ENCODE measurements at regions of chr6 and their contacts with region 1.

Region 1: GRCh38 chr6:129709769-129710449 is at the start of gene ARHGAP18:
- DNase-seq: peak; percentile 87 to 92
- ATAC-seq: peak; percentile 96 to 99 (median 97)
- H3K4me3 ChIP-seq: peak within 1 kb of the TSS; percentile 44 to 73 (median 68)
- H3K27ac ChIP-seq: peak within 1 kb of the TSS; percentile 48 to 87 (median 78)
- H3K4me1 ChIP-seq: peaks cover 0 to 59% (median 26%) of the 10 kb centered on the region in 9 donors
- H3K27me3 ChIP-seq: no peaks in the 10 kb centered on the region
- CTCF ChIP-seq: no peak
- total RNA-seq, gene ARHGAP18: 3.4 to 15.4 (median 4.2) TPM

Region 2: DNA sequence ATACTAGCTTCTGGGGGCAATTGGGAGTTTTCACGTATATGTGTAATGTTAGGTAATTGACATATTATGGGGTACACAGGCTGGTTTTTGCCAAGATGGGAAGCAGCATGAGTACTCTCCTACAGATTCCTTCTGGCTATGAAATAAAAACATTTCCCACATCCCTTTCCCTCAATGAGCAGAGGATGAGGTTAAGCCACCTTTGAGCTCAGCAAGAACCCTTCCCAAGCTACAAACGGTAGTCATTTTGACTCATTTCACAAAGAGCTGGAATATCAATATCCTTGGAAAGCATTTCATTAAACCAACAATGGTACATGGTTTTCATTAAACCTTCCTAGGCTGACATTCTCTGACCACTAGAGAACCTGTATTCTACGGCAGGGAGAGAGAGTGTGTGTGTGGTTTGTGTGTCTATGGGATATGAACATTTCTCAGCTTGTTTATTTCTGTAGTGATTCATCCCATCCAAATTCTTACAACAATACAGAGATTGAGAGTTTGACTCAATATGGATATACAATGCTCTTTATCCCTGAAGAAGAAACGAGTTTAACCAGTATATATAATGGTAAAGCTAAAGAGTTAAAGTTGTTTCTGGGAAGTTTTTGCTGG is 119.4 kb before region 1 on chr6:
- intact Hi-C with region 1: no loop called
- DNase-seq: no peak
- ATAC-seq: no peak
- H3K4me3 ChIP-seq: no peak overlapping the region
- H3K27ac ChIP-seq: no peak overlapping the region
- H3K4me1 ChIP-seq: no peaks in the 10 kb centered on the region
- H3K27me3 ChIP-seq: no peaks in the 10 kb centered on the region
- CTCF ChIP-seq: no peak

Region 3: DNA sequence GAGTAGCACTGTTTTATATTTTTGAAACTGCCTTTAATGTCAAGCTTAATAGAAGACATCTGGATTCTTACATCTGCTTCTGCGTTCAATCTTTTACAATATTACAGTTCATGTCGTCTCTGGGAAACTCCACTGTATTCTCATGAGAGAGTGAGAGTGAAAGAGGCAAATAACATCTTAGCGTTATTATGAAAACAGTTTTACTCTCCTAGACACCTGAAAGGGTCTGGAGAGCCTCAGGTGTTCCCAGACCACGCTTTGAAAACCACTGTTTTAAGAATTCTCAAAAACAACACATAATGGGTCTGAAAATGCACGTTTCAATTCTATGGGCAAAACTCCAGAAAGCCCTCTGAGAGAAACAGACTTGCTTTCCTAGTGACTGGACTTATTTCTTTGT is 63.3 kb before region 1 on chr6:
- intact Hi-C with region 1: loop called in 2 of 10 experiments (anchors 2 to 10 kb)
- DNase-seq: no peak
- ATAC-seq: peak in 5 of 8 donors; percentile 8 to 66 (median 46)
- H3K4me3 ChIP-seq: peak overlapping the region in 5 of 10 donors; percentile 11 to 26 (median 19)
- H3K27ac ChIP-seq: peak overlapping the region; percentile 25 to 75 (median 58)
- H3K4me1 ChIP-seq: peaks cover 0 to 62% (median 47%) of the 10 kb centered on the region in 9 donors
- H3K27me3 ChIP-seq: no peaks in the 10 kb centered on the region
- CTCF ChIP-seq: no peak

Region 4: GRCh38 chr6:129661536-129662405 is 48.1 kb before region 1 on chr6:
- intact Hi-C with region 1: loop called in 1 of 10 experiments (anchors 10 kb)
- DNase-seq: no peak
- ATAC-seq: no peak
- H3K4me3 ChIP-seq: no peak overlapping the region
- H3K27ac ChIP-seq: peak overlapping the region in 2 of 10 donors; percentile 7
- H3K4me1 ChIP-seq: peaks cover 0 to 59% (median 27%) of the 10 kb centered on the region in 9 donors
- H3K27me3 ChIP-seq: no peaks in the 10 kb centered on the region
- CTCF ChIP-seq: no peak

Region 5: DNA sequence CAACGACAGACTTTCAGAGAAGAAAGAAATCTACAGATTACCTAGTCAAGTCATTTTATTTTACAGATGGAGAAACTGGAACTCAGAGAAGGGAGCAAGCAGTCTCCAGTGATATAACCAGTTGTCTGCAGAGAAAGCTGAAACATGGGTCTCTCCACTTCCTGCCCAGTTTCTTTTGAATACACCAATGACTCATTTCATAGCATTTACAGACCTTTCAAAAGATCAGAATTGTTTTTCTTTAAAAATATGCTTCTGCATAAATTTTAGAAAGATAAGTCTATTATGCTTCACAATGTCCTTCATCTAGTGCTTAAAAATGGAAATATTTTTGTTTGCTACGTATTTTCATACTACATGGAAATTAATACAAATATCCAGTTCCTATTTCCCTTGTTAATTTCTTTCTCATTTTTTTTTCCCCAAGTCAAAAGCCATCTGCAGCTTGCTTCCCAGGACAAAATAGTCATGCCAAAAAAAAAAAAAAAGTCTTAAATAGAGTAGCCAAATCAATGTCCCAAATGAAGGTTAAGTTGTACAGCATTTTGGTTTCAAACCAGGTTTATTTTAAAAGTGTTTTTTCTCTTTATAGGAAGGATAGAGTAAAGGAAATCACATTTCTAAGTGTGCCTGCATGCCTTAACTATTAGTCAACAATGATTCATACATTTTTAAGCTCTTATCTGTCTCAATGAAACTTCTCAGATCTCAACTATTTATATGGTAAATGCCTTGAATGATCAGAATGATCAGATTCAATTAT is 36.8 kb before region 1 on chr6:
- intact Hi-C with region 1: loop called in 2 of 10 experiments (anchors 5 to 10 kb)
- DNase-seq: no peak
- ATAC-seq: peak in 6 of 8 donors; percentile 60 to 76 (median 66)
- H3K4me3 ChIP-seq: peak overlapping the region in 1 of 10 donors; percentile 3
- H3K27ac ChIP-seq: peak overlapping the region in 9 of 10 donors; percentile 5 to 88 (median 63)
- H3K4me1 ChIP-seq: peaks cover 3 to 48% (median 29%) of the 10 kb centered on the region in 9 donors
- H3K27me3 ChIP-seq: no peaks in the 10 kb centered on the region
- CTCF ChIP-seq: no peak

Region 6: DNA sequence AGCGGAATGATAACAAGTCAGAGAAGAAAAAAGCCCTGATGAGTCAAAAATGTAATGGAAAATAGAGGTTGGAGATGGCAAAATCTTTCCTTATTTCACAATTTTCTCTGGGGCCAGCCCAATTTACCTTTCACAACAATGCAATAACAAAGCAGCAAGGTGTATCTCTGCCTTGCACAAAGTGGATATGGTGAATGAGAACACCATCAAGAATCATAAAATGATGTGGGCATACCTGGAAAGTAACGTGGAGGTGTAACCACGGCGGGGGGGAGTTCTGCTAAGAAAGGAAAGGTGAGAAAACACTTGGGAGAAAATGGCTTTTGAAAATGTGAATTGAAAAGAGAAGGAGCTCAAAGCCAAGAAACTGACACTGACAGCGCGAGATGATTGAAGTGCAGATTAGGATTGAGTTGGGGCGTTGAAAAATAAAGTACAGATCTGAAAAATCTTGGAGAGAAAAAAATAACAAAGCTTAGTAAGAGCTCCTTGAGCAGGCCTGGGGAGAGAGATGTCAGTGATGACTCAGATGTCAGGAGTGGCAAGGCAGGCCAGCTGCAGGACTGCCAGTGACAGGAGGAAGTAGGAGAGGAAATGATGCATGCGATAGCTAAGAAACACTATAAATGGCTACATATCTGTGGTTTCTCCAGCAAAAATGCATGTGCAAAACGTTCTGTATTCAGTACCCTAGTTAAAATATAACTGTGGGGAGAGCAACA is 26.1 kb before region 1 on chr6:
- intact Hi-C with region 1: loop called in 1 of 10 experiments (anchors 1 kb)
- DNase-seq: peak; percentile 61 to 77
- ATAC-seq: peak; percentile 91 to 97 (median 93)
- H3K4me3 ChIP-seq: peak overlapping the region in 1 of 10 donors; percentile 11
- H3K27ac ChIP-seq: peak overlapping the region; percentile 1 to 90 (median 72)
- H3K4me1 ChIP-seq: peaks cover 0 to 99% (median 49%) of the 10 kb centered on the region in 9 donors
- H3K27me3 ChIP-seq: no peaks in the 10 kb centered on the region
- CTCF ChIP-seq: no peak

Measured in heart right ventricle (tissue), 16 donors.